Heart right ventricle (tissue), 16 donors: ENCODE measurements at regions of chr6 and their contacts with region 1.

Region 1: DNA sequence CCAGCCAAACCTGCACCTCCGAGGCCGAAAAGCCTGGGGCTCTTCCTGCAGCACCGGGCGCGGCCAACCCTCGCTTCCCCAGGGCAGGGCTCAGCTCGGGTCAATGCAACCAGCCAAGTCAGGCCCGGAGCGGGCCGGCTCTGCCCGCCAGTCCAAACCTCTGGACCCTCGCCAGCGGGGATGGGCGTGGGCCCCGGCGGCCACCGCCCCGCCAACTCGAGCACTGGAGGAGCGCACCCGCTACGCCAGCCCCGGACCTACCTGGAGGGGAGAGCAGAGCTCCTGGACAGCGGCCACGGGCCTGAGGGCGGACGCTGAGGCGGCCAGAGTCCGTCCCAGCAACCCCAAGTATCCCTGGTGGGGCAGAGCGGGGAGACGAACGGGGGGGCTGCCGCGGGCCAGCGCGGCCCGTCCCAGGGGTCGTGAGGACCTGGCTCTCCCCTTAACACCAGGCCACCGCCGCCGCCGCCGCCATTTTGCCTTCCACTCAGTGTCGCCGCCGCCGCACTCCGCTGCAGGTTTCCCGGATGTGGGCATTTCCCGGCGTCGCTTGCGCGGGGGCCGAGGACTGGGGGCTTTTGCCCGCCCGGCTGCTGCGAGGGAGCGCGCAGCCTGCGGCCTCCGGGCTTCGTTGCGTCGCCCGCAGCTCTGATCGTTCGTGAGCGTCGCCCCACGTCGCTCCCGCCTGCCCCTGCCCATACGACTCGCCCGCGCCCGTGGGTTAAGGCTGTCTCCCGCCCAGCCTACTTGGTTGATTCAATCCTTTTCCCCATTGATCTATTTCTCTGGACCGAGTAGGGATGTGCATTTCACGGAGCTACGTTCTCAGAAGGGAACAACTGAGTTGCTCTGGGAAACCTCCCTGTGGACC is at the start of gene LATS1:
- DNase-seq: peak; percentile 91 to 93
- ATAC-seq: peak; percentile 93 to 97 (median 95)
- H3K4me3 ChIP-seq: peak within 1 kb of the TSS; percentile 63 to 98 (median 88)
- H3K27ac ChIP-seq: peak within 1 kb of the TSS; percentile 90 to 100 (median 99)
- H3K4me1 ChIP-seq: peaks cover 0 to 41% (median 28%) of the 10 kb centered on the region in 9 donors
- H3K27me3 ChIP-seq: no peaks in the 10 kb centered on the region
- CTCF ChIP-seq: no peak
- total RNA-seq, gene LATS1: 10.5 to 16.9 (median 13.8) TPM

Region 2: GRCh38 chr6:149284904-149285303 is 432.9 kb before region 1 on chr6:
- intact Hi-C with region 1: no loop called
- DNase-seq: no peak
- ATAC-seq: no peak
- H3K4me3 ChIP-seq: no peak overlapping the region
- H3K27ac ChIP-seq: no peak overlapping the region
- H3K4me1 ChIP-seq: no peaks in the 10 kb centered on the region
- H3K27me3 ChIP-seq: peaks cover 0 to 16% (median 0%) of the 10 kb centered on the region in 7 donors
- CTCF ChIP-seq: no peak

Region 3: GRCh38 chr6:149513915-149514314 is 203.9 kb before region 1 on chr6:
- intact Hi-C with region 1: no loop called
- DNase-seq: no peak
- ATAC-seq: peak in 2 of 8 donors; percentile 14 to 20
- H3K4me3 ChIP-seq: no peak overlapping the region
- H3K27ac ChIP-seq: no peak overlapping the region
- H3K4me1 ChIP-seq: peaks cover 0 to 8% (median 0%) of the 10 kb centered on the region in 9 donors
- H3K27me3 ChIP-seq: no peaks in the 10 kb centered on the region
- CTCF ChIP-seq: no peak

Region 4: GRCh38 chr6:149545754-149546528 is 171.9 kb before region 1 on chr6 and contains the start of gene PPIL4:
- intact Hi-C with region 1: loop called in 1 of 10 experiments (anchors 10 kb)
- DNase-seq: peak; percentile 96 to 98
- ATAC-seq: peak; percentile 98 to 99 (median 99)
- H3K4me3 ChIP-seq: peak within 1 kb of the TSS; percentile 65 to 98 (median 86)
- H3K27ac ChIP-seq: peak within 1 kb of the TSS; percentile 84 to 99 (median 95)
- H3K4me1 ChIP-seq: peaks cover 6 to 39% (median 33%) of the 10 kb centered on the region in 9 donors
- H3K27me3 ChIP-seq: peaks cover 0 to 3% (median 0%) of the 10 kb centered on the region in 7 donors
- CTCF ChIP-seq: peak; percentile 66 to 91 (median 82)
- total RNA-seq, gene PPIL4: 15.2 to 22.0 (median 18.1) TPM

Region 5: GRCh38 chr6:149565527-149566409 is 152.1 kb before region 1 on chr6 and contains the start of gene GINM1:
- intact Hi-C with region 1: loop called in 2 of 10 experiments (anchors 10 kb)
- DNase-seq: peak; percentile 93 to 97
- ATAC-seq: peak; percentile 96 to 98 (median 98)
- H3K4me3 ChIP-seq: peak within 1 kb of the TSS; percentile 80 to 100 (median 98)
- H3K27ac ChIP-seq: peak within 1 kb of the TSS; percentile 44 to 97 (median 95)
- H3K4me1 ChIP-seq: peaks cover 0 to 35% (median 20%) of the 10 kb centered on the region in 9 donors
- H3K27me3 ChIP-seq: no peaks in the 10 kb centered on the region
- CTCF ChIP-seq: peak in 8 of 9 donors; percentile 41 to 81 (median 64)
- total RNA-seq, gene GINM1: 48.6 to 59.3 (median 55.7) TPM

Region 6: GRCh38 chr6:149648148-149649145 is 69.4 kb before region 1 on chr6 and contains the start of gene KATNA1:
- intact Hi-C with region 1: loop called in 1 of 10 experiments (anchors 5 kb)
- DNase-seq: peak; percentile 85 to 91
- ATAC-seq: peak; percentile 97 to 99 (median 98)
- H3K4me3 ChIP-seq: peak within 1 kb of the TSS; percentile 76 to 95 (median 86)
- H3K27ac ChIP-seq: peak within 1 kb of the TSS; percentile 19 to 93 (median 87)
- H3K4me1 ChIP-seq: peaks cover 0 to 28% (median 18%) of the 10 kb centered on the region in 9 donors
- H3K27me3 ChIP-seq: no peaks in the 10 kb centered on the region
- CTCF ChIP-seq: peak in 4 of 9 donors; percentile 9 to 21 (median 18)
- total RNA-seq, gene KATNA1: 9.4 to 14.2 (median 12.0) TPM

Region 7: GRCh38 chr6:149852180-149852579 is 134.4 kb after region 1 on chr6:
- intact Hi-C with region 1: no loop called
- DNase-seq: no peak
- ATAC-seq: peak in 7 of 8 donors; percentile 46 to 93 (median 74)
- H3K4me3 ChIP-seq: no peak overlapping the region
- H3K27ac ChIP-seq: peak overlapping the region in 1 of 10 donors; percentile 29
- H3K4me1 ChIP-seq: peaks cover 0 to 17% (median 9%) of the 10 kb centered on the region in 9 donors
- H3K27me3 ChIP-seq: no peaks in the 10 kb centered on the region
- CTCF ChIP-seq: no peak

Region 8: DNA sequence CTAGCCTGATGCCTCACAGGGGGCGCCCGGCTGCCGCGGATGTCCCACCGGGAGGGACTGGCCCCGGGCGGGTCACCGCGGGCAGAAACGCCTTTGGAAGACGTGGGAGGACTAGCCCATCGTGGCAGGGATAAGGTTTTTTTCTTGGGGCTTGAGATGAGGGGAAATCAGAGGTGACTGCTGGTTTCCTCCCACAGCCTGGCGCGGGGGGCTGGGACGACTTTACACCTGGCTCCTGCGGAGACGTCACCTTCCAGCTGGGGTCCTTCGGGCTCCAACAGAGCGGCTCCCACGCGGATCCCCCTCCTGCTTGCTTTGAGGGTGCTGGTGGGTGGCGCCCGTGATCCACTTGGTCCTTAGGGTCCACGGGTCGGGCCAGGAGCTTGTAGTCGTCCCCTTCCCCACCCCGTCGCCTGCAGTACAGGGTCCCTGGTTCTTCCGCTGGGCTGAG is 339.7 kb after region 1 on chr6:
- intact Hi-C with region 1: no loop called
- DNase-seq: no peak
- ATAC-seq: no peak
- H3K4me3 ChIP-seq: no peak overlapping the region
- H3K27ac ChIP-seq: no peak overlapping the region
- H3K4me1 ChIP-seq: no peaks in the 10 kb centered on the region
- H3K27me3 ChIP-seq: peaks cover 0 to 50% (median 29%) of the 10 kb centered on the region in 7 donors
- CTCF ChIP-seq: no peak